Dendritic cell treated with granulocyte-macrophage colony-stimulating factor and Interleukin-4, amounts not matched to agents 40 ng/mL and 50 ng/mL, for 4 days (primary cell): ENCODE measurements at regions of chr3 and their contacts with region 1.

Region 1: GRCh38 chr3:49723628-49724551 is at the start of gene GMPPB:
- H3K4me3 Mint-ChIP-seq: peak within 1 kb of the TSS; percentile 94
- H3K27ac Mint-ChIP-seq: peak within 1 kb of the TSS; percentile 100
- H3K4me1 Mint-ChIP-seq: peaks cover 62% of the 10 kb centered on the region
- H3K27me3 Mint-ChIP-seq: peaks cover 2% of the 10 kb centered on the region

Region 2: DNA sequence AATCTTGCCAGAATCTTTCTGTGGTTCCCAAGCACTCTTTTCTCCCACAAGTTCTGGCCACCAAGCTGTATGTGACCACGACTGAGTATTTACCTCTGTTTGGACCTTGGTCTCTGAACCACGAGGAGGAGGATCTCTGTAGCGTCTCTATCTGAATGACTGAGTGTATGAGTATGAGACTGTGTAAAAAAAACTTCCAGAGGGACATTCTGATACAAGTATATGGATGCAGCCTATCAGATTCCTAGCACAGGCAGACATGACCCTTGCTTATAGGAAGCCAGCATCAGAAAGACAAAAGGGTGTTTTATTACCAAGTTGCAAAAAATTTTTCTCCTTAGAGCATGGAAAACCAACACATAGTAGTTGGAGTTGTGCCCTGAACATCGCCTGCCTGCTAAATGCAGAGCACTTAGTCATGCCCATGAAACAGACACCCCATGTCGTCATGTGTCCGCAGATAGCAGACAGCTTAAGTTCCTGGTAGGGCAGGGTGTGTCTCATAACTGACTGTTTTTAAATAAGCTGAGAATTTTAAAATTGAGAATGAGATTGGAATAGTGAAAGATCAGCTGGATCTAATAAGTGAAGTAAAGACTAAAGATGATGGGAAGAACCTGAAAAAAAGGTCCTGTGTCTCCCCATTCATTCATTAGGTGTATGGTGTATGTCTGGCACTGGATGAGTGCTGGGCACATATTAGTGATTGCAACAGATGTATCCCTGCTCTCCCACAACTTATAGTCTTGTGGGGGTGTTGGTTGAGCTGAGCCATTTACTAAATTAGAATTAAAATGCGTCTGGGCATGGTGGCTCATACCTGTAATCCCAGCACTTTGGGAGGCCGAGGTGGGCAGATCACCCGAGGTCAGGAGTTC is 222.9 kb before region 1 on chr3:
- intact Hi-C with region 1: no loop called
- H3K4me3 Mint-ChIP-seq: peak overlapping the region; percentile 32
- H3K27ac Mint-ChIP-seq: peak overlapping the region; percentile 86
- H3K4me1 Mint-ChIP-seq: peaks cover 29% of the 10 kb centered on the region
- H3K27me3 Mint-ChIP-seq: no peaks in the 10 kb centered on the region

Region 3: GRCh38 chr3:49786241-49786958 is 62.5 kb after region 1 on chr3 and contains the start of gene IP6K1:
- intact Hi-C with region 1: loop called (anchors 10 kb)
- H3K4me3 Mint-ChIP-seq: peak within 1 kb of the TSS; percentile 85
- H3K27ac Mint-ChIP-seq: peak within 1 kb of the TSS; percentile 94
- H3K4me1 Mint-ChIP-seq: peaks cover 27% of the 10 kb centered on the region
- H3K27me3 Mint-ChIP-seq: peaks cover 4% of the 10 kb centered on the region

Region 4: GRCh38 chr3:49924683-49925082 is 200.8 kb after region 1 on chr3:
- intact Hi-C with region 1: no loop called
- H3K4me3 Mint-ChIP-seq: no peak overlapping the region
- H3K27ac Mint-ChIP-seq: no peak overlapping the region
- H3K4me1 Mint-ChIP-seq: peaks cover 18% of the 10 kb centered on the region
- H3K27me3 Mint-ChIP-seq: no peaks in the 10 kb centered on the region